ENCODE measurements at regions of chr11 and their contacts with region 1.

Region 1: GRCh38 chr11:15650105-15650938 is 535.6 kb downstream of the INSC start:
- DNase-seq: peak; percentile 98
- H3K4me3 ChIP-seq: peak overlapping the region; percentile 51 to 62 (median 54)
- H3K27ac ChIP-seq: peak overlapping the region; percentile 61 to 73 (median 68)
- H3K4me1 ChIP-seq: peaks cover 8 to 16% (median 15%) of the 10 kb centered on the region in 4 donors
- H3K27me3 ChIP-seq: no peaks in the 10 kb centered on the region
- CTCF ChIP-seq: peak; percentile 96 to 99 (median 96)
- EP300 ChIP-seq: no peak
- POLR2A ChIP-seq: no peak

Region 2: DNA sequence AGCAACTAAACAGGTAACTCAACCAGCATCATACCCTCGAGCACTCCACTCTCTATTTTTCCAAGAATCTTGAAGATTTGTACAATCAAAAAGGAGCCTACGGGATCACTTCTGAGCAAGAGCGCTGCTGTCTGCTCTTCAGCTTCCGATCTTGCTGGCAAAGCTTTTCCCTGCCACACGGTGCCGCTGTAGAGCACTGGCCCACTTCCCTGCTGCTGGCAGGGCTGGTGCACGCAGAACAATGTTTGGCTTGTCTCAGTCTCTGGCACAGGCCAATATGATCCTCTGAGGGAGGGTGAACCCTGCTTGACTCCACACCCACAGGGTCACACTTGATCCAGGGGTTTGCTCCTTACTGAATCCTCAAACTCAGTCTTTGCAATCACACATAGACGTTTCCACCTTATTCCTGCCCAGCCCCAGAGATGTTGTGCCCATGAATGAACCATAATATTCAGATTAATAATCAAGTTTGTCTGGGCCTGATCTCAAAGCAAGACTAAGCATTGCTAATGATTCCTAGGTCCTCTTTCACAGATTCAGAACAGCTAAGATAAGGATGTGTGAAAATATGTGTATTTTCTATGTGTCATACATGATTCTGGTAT is 169.5 kb after region 1 on chr11:
- intact Hi-C with region 1: loop called (anchors 5 kb)
- DNase-seq: peak; percentile 89
- H3K4me3 ChIP-seq: no peak overlapping the region
- H3K27ac ChIP-seq: no peak overlapping the region
- H3K4me1 ChIP-seq: peaks cover 41 to 52% (median 47%) of the 10 kb centered on the region in 4 donors
- H3K27me3 ChIP-seq: no peaks in the 10 kb centered on the region
- CTCF ChIP-seq: peak; percentile 73 to 90 (median 77)
- EP300 ChIP-seq: no peak
- POLR2A ChIP-seq: no peak

Region 3: GRCh38 chr11:15988693-15989231 is 338.4 kb after region 1 on chr11:
- intact Hi-C with region 1: loop called (anchors 5 kb)
- DNase-seq: no peak
- H3K4me3 ChIP-seq: no peak overlapping the region
- H3K27ac ChIP-seq: no peak overlapping the region
- H3K4me1 ChIP-seq: peaks cover 9 to 15% (median 10%) of the 10 kb centered on the region in 4 donors
- H3K27me3 ChIP-seq: no peaks in the 10 kb centered on the region
- CTCF ChIP-seq: peak in 2 of 3 experiments; percentile 37 to 40
- EP300 ChIP-seq: no peak
- POLR2A ChIP-seq: no peak

Measured in esophagus muscularis mucosa (tissue), 4 donors.